ENCODE measurements at regions of chr1 and their contacts with region 1.

Region 1: GRCh38 chr1:179365320-179366092 is at the start of gene AXDND1:
- DNase-seq: peak; percentile 82 to 98 (median 94)
- ATAC-seq: peak; percentile 90 to 92
- H3K4me3 Mint-ChIP-seq: peak within 1 kb of the TSS; percentile 91 to 99 (median 98)
- H3K27ac Mint-ChIP-seq: peak within 1 kb of the TSS; percentile 100
- H3K4me1 Mint-ChIP-seq: peaks cover 0 to 19% (median 10%) of the 10 kb centered on the region in 4 donors
- H3K27me3 Mint-ChIP-seq: peaks cover 0 to 1% (median 0%) of the 10 kb centered on the region in 5 donors
- polyA plus RNA-seq, gene AXDND1: not detected

Region 2: GRCh38 chr1:179081687-179082332 is 283.7 kb before region 1 on chr1 and contains the start of gene TOR3A:
- POLR2A ChIA-PET with region 1: interaction called, 12 read pairs
- DNase-seq: peak; percentile 56 to 87 (median 71)
- ATAC-seq: peak; percentile 68 to 78
- H3K4me3 Mint-ChIP-seq: peak within 1 kb of the TSS; percentile 90 to 98 (median 96)
- H3K27ac Mint-ChIP-seq: peak within 1 kb of the TSS; percentile 90 to 97 (median 96)
- H3K4me1 Mint-ChIP-seq: peaks cover 15 to 43% (median 30%) of the 10 kb centered on the region in 4 donors
- H3K27me3 Mint-ChIP-seq: no peaks in the 10 kb centered on the region
- polyA plus RNA-seq, gene TOR3A: 27.6 to 40.5 (median 29.4) TPM

Region 3: GRCh38 chr1:179293340-179294327 is 71.9 kb before region 1 on chr1 and contains the start of gene SOAT1:
- POLR2A ChIA-PET with region 1: interaction called, 41 read pairs
- DNase-seq: peak; percentile 89 to 97 (median 92)
- ATAC-seq: peak; percentile 93 to 95
- H3K4me3 Mint-ChIP-seq: peak within 1 kb of the TSS; percentile 90 to 100 (median 95)
- H3K27ac Mint-ChIP-seq: peak within 1 kb of the TSS; percentile 49 to 99 (median 94)
- H3K4me1 Mint-ChIP-seq: peaks cover 18 to 49% (median 48%) of the 10 kb centered on the region in 4 donors
- H3K27me3 Mint-ChIP-seq: no peaks in the 10 kb centered on the region
- polyA plus RNA-seq, gene SOAT1: 55.1 to 80.1 (median 65.3) TPM